ENCODE measurements at regions of chr1 and their contacts with region 1.

Region 1: DNA sequence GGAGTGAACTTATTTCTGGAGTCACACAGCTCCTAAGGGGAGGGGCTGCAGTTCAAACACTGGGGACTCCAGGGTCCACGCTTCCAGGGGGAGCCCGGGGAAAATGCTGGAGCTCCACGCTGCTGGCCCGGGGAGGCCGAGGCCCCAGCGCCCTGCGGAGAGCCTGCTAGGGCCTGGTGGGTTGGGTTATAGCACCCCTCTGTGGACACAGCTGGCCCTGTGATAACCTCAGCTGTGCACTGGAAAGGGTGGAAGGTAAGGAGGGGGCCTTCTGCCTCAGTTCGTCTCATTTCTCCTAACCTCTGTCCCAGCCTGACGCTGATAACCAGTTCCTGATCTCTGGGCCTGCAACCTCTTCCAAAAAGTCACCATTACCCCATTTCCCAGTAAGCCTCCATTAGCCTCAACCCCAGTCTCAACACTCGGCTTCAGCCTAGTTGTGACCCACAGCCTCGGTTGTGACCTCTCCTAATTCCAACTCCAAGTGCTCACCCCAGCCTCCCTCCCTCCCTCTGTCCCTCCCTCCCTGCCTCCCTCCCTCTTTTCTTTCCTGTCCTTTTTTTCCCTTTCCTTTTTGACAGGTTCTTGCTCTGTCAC is 7.1 kb downstream of the NBL1 start:
- DNase-seq: no peak
- H3K4me3 ChIP-seq: peak overlapping the region; percentile 24 to 36
- H3K27ac ChIP-seq: peak overlapping the region; percentile 96
- H3K4me1 ChIP-seq: peaks cover 95% of the 10 kb centered on the region
- H3K27me3 ChIP-seq: no peaks in the 10 kb centered on the region
- CTCF ChIP-seq: peak in 2 of 3 experiments; percentile 55 to 76
- POLR2A ChIP-seq: no peak

Region 2: DNA sequence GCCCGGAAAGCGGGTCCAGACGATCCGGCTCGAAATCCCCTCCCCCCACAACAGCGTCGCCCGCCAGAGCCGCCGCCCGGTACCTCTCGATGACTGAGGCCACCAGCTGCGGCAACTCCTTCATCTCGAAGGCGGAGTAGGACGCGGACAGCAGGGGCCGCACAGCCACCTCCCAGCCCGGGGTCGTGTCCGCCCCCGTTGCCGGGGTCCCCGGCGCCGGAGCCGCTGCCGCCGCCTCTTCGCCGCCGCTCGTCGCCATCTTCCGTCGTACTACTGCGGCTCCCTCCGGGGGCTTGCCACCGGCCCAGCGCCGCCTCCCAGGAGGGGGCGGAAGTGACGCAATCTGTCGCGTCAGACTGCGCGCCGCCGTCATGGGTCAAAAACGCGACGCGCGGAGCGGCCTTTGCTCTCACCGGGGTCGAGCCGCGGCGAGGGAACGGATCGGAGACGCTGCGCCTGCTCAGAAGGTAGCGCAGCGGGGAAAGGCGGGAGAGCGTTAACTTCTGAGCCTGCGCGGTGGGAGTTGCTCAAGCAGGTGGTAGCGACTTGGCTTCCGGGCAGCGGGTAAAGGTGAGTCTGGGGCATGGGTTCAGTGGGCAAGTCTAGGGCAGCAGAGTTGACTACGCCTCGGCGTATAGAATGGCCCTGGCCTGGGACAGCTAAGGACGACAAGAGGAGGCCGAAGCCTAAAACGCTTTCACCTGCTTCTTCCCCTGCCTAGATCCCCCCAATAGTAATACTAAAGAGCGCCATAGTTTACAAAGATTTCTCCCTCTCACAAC is 441.1 kb before region 1 on chr1 and contains the start of gene UBR4:
- intact Hi-C with region 1: loop called (anchors 10 kb)
- DNase-seq: peak; percentile 92 to 98
- H3K4me3 ChIP-seq: peak within 1 kb of the TSS; percentile 80 to 99
- H3K27ac ChIP-seq: peak within 1 kb of the TSS; percentile 98
- H3K4me1 ChIP-seq: peaks cover 65% of the 10 kb centered on the region
- H3K27me3 ChIP-seq: no peaks in the 10 kb centered on the region
- CTCF ChIP-seq: peak in 1 of 3 experiments; percentile 4
- POLR2A ChIP-seq: peak; percentile 79 to 89
- total RNA-seq, gene UBR4: 157 TPM

Region 3: GRCh38 chr1:19257178-19257914 is 393.9 kb before region 1 on chr1:
- intact Hi-C with region 1: loop called (anchors 5 kb)
- DNase-seq: no peak
- H3K4me3 ChIP-seq: no peak overlapping the region
- H3K27ac ChIP-seq: no peak overlapping the region
- H3K4me1 ChIP-seq: peaks cover 18% of the 10 kb centered on the region
- H3K27me3 ChIP-seq: no peaks in the 10 kb centered on the region
- CTCF ChIP-seq: no peak
- POLR2A ChIP-seq: no peak

Region 4: DNA sequence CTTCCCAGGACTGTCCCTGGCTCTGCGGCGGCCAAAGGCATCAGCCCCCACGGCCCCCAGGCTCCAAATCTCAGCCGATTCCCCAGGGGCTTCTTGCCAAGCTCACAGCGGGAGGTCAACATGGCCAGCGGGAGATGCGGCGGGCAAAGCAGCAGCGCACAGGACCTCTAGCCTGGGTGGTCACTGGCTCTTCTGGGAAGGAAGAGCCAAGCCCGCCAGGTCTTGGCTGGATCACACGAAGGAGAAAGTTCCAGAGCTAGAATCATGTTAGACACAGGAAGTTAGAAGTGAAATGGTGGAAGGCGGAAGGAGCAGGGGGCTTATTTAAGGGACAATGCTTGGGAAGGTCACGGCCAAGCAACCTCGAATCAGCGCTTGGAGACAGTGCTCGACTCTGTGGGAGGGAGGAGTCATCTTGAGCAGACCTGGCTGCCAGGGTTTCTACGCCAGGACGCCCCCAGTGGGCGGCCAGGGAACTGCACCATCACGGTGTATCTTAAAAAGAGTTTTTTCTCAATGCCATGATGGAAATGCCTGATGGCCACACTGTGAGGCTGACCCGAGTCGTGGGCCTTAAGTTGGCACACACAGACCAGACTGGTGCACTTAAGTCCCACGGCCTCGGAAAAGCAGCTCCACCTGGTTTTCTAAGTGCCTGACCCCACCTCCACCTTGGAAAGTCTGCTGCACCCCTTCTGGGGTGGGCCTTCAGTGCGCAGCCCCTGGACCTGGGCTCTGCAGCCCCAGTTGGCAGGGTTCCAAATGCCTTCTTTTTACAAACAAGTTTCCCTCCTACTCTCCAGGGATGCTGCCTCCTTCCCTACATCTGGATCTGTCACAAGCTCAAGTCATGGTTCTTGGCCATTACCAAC is 309.8 kb before region 1 on chr1:
- intact Hi-C with region 1: loop called (anchors 5 kb)
- DNase-seq: no peak
- H3K4me3 ChIP-seq: no peak overlapping the region
- H3K27ac ChIP-seq: peak overlapping the region; percentile 70
- H3K4me1 ChIP-seq: peaks cover 46% of the 10 kb centered on the region
- H3K27me3 ChIP-seq: no peaks in the 10 kb centered on the region
- CTCF ChIP-seq: peak; percentile 44 to 61 (median 47)
- POLR2A ChIP-seq: no peak

Region 5: DNA sequence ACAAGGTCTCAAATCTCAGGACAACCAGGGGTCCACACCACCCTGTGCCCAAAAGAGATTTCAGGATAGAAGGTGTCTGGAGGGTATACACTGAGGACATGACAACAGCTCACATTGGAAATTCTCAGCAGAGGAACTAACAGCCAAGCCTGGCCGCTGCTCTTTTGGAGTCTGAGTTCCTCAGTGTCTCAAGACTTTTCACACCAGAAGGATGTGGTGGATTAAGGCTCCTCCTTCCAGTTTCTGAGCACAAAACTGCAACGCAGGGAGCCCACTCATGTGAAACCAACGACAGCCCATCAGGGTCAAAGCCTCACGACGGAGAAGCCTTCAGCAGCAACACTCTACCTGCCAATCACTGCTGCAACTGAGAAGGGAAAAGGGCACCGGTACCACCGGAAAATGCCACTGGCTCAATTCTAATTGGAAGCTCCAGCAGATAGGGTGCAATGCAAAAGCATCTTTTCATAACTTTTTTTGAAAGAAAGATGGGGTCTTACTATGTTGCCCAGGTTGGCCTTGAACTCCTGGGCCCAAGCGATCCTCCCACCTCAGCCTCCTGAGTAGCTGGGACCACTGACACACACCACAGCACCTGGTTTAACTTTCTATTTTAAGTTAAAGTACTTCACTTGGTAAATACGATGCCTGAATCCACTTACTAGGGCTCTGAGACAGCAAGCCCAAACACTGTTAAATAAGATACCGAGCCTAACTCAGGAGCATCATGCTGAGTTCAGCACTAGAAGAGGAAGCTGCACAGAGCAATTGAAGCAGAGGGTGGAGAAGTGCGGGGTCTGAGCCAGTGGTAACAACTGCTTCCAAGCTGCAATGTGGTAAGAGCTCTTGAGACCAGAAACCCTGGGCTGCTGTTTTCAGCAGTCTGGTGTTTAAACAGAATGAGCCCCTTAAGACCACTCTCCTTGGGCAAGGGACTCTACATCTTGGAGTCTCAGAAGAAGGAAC is 173.7 kb before region 1 on chr1:
- intact Hi-C with region 1: no loop called
- DNase-seq: no peak
- H3K4me3 ChIP-seq: no peak overlapping the region
- H3K27ac ChIP-seq: peak overlapping the region; percentile 66
- H3K4me1 ChIP-seq: peaks cover 99% of the 10 kb centered on the region
- H3K27me3 ChIP-seq: no peaks in the 10 kb centered on the region
- CTCF ChIP-seq: no peak
- POLR2A ChIP-seq: no peak

Region 6: GRCh38 chr1:20185834-20186782 is 534.9 kb after region 1 on chr1 and contains the starts of genes PLA2G2C and UBXN10:
- intact Hi-C with region 1: no loop called
- DNase-seq: no peak
- H3K4me3 ChIP-seq: peak within 1 kb of the TSS; percentile 32 to 49
- H3K27ac ChIP-seq: no peak within 1 kb of the TSS
- H3K4me1 ChIP-seq: peaks cover 17% of the 10 kb centered on the region
- H3K27me3 ChIP-seq: no peaks in the 10 kb centered on the region
- CTCF ChIP-seq: no peak
- POLR2A ChIP-seq: no peak
- total RNA-seq, gene PLA2G2C: not detected
- total RNA-seq, gene UBXN10: 0.49 TPM